H1 (cell line): ENCODE measurements at regions of chr22 and their contacts with region 1.

Region 1: GRCh38 chr22:30444632-30445437 is 19.3 kb downstream of the MTFP1 start:
- DNase-seq: peak; percentile 59 to 91
- H3K4me3 ChIP-seq: peak overlapping the region in 2 of 4 experiments; percentile 16 to 42; a peak in 4 of 8 replicates
- H3K27ac ChIP-seq: no peak overlapping the region
- H3K4me1 ChIP-seq: peaks cover 0 to 5% (median 5%) of the 10 kb centered on the region in 4 experiments; a peak in 6 of 7 replicates
- H3K27me3 ChIP-seq: no peaks in the 10 kb centered on the region
- CTCF ChIP-seq: peak; percentile 79 to 85 (median 82)
- EP300 ChIP-seq: no peak
- POLR2A ChIP-seq: no peak; a peak in 1 of 3 replicates
- RAD21 ChIP-seq: peak; percentile 83 to 87

Region 2: GRCh38 chr22:30459181-30460052 is 14.6 kb after region 1 on chr22:
- CTCF ChIA-PET with region 1: interaction called, 56 read pairs
- POLR2A ChIA-PET with region 1: no interaction called
- DNase-seq: peak in 1 of 2 experiments; percentile 52
- H3K4me3 ChIP-seq: no peak overlapping the region
- H3K27ac ChIP-seq: no peak overlapping the region
- H3K4me1 ChIP-seq: no peaks in the 10 kb centered on the region
- H3K27me3 ChIP-seq: no peaks in the 10 kb centered on the region
- CTCF ChIP-seq: no peak
- EP300 ChIP-seq: no peak
- POLR2A ChIP-seq: no peak
- RAD21 ChIP-seq: no peak

Region 3: GRCh38 chr22:30474683-30475424 is 30.0 kb after region 1 on chr22:
- CTCF ChIA-PET with region 1: interaction called, 11 read pairs
- POLR2A ChIA-PET with region 1: interaction called, 3 read pairs
- DNase-seq: no peak
- H3K4me3 ChIP-seq: no peak overlapping the region
- H3K27ac ChIP-seq: no peak overlapping the region
- H3K4me1 ChIP-seq: no peaks in the 10 kb centered on the region; a peak in 1 of 7 replicates
- H3K27me3 ChIP-seq: no peaks in the 10 kb centered on the region; a peak in 1 of 7 replicates
- CTCF ChIP-seq: no peak
- EP300 ChIP-seq: no peak
- POLR2A ChIP-seq: no peak
- RAD21 ChIP-seq: no peak

Region 4: DNA sequence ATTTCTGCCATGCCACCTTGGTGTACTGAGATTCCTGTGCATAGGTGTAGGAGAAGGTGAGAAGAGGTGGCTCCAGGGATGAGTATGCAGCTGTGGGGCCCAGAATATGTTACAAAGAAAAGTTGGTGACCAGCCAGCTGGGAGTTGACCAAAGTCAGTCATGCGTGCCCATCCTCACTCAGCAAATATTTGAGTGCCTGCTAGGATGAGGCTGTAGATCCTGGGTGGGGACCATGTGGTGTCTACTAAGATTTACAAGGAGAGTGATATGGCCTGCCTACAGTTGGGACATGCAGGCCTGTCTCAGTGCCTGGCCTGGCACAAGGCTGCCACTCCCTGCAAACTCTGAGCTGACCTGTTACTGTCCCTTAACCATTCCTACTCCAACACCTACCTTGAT is 734.5 kb after region 1 on chr22:
- CTCF ChIA-PET with region 1: no interaction called
- POLR2A ChIA-PET with region 1: no interaction called
- DNase-seq: no peak
- H3K4me3 ChIP-seq: no peak overlapping the region
- H3K27ac ChIP-seq: no peak overlapping the region
- H3K4me1 ChIP-seq: no peaks in the 10 kb centered on the region
- H3K27me3 ChIP-seq: no peaks in the 10 kb centered on the region
- CTCF ChIP-seq: no peak
- EP300 ChIP-seq: no peak
- POLR2A ChIP-seq: no peak
- RAD21 ChIP-seq: no peak